Posterior cingulate gyrus (tissue), 11 donors: ENCODE measurements at regions of chr22 and their contacts with region 1.

Region 1: DNA sequence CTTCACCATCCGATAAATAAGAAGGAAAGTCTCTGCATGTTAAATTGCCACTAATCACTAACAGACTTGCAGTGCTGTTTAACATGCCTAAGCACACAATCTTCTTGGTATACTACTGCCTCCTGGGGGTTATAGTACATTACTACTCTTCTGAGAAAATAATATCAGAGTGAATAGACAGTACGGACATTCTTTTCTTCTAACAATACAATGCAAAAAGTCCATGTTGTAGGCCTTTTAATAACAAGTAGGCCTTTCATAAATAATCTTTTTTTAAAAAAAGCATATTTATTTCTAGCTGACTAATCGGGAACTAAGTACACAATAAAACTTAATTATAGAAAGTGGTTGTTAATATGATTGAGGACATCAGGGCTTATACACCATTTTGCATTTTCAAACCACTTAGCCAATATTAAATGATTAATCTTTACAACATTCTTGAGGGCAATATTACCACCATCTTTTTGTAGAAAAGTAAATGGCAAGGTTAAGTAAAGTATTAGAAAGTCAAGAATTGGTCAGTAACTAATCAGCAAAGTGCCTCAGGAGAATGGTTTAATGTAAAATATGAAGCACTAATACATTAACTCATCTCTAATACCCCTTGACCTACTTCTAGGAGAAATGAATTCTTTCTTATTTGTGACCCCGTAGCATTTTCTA is 84.7 kb downstream of the TTC28 start:
- DNase-seq: no peak

Region 2: DNA sequence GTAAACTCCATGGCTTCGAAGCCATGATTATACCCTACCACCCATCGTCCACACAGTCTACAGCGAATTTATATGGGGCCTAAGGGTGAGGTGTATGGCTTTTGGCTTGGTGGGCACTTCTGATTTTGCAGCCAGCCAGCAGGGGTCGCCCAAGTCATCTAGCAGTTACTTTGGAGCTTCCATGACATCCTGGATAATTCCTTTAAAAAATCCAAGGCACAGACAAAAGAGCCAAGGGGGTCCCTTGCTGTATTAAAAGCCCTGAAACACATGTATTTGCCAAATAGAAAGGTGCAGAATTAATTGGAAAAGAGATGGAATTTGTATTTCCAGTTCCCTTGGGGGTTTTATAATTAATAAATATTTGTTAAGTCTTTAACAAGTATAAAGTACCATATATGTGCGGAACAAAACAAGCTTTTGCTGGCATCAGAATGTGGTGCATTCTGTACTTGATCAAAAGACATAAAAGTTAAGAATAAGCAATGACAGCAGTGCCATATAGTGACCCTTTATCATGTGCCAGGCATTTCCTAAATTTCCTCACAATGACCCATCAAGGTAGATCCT is 543.1 kb before region 1 on chr22:
- intact Hi-C with region 1: loop called (anchors 1 kb)
- DNase-seq: peak; percentile 43 to 95 (median 74)

Region 3: GRCh38 chr22:28560046-28560742 is 34.7 kb before region 1 on chr22:
- intact Hi-C with region 1: no loop called
- DNase-seq: no peak